ENCODE measurements at regions of chr12 and their contacts with region 1.

Region 1: DNA sequence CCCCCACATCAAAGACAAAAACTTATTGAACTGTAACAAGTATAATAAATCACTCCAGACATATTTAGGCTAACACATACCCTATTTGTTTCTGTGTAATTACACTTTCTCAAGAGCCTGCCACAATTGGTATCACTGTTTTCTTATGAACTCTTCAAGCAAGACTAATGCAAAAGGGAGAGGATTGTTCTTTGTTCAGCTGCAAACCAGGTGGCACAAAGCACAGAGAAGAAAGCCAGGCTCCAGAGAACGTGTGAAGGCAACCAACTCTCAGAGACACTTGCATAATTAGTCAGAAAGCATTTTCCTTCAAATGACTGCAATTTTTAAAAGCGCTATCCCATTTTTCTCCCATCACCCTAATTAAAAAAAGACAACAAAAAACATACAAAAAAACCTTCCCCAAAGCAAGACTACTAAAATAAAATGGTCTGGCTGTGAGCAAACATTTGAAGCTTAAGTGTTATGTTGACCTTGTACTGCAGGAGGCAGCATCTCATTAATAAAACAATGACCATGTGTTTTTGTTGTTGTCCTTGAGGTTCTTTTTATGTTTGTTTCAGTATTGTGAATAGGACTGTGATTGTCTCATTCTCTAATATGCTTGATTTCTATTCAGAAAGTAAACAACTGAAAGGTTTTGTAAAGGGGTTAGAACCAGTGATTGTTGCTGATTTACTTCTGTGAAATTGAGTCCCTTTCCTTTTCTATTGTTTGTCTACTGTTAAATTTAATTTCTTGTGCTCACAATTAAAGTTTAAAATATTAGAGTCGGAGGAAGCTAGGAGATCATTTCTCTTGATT is 452.7 kb upstream of the PDE3A start:
- DNase-seq: peak; percentile 85
- H3K4me3 ChIP-seq: no peak overlapping the region
- H3K27ac ChIP-seq: no peak overlapping the region
- H3K4me1 ChIP-seq: peaks cover 5% of the 10 kb centered on the region
- H3K27me3 ChIP-seq: no peaks in the 10 kb centered on the region
- CTCF ChIP-seq: peak; percentile 42 to 48
- POLR2A ChIP-seq: no peak

Region 2: DNA sequence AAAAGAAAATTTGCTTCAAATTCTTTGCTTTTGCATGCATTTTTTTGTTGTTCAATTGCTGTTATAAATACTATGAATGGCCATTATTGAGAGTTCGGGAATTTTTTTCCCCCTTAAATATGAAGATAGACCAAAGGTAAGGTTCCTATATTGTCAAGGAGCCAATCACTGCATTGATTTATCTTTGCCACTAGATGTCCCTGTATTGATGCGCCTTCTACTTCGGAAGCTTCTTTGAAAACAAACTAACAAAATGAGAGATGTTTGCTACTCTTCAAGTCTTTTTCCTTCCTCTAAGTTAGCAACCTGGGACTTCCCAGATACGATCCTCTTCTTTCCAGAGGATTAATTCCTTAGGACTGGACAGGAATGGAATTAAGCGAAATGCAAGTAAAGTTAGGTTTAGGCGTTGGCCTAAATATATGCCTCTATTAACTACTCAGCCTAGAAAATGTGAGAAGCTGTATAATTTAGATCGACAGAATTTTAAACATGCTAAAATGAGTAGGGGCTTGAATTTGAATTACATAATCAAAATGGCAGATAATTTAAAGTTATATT is 158.2 kb before region 1 on chr12:
- CTCF ChIA-PET with region 1: interaction called, 34 read pairs
- POLR2A ChIA-PET with region 1: no interaction called
- dilution Hi-C with region 1: no loop called
- intact Hi-C with region 1: loop called (anchors 1 kb)
- DNase-seq: peak; percentile 64
- H3K4me3 ChIP-seq: no peak overlapping the region
- H3K27ac ChIP-seq: no peak overlapping the region
- H3K4me1 ChIP-seq: peaks cover 3% of the 10 kb centered on the region
- H3K27me3 ChIP-seq: no peaks in the 10 kb centered on the region
- CTCF ChIP-seq: peak; percentile 46 to 56
- POLR2A ChIP-seq: no peak

Region 3: DNA sequence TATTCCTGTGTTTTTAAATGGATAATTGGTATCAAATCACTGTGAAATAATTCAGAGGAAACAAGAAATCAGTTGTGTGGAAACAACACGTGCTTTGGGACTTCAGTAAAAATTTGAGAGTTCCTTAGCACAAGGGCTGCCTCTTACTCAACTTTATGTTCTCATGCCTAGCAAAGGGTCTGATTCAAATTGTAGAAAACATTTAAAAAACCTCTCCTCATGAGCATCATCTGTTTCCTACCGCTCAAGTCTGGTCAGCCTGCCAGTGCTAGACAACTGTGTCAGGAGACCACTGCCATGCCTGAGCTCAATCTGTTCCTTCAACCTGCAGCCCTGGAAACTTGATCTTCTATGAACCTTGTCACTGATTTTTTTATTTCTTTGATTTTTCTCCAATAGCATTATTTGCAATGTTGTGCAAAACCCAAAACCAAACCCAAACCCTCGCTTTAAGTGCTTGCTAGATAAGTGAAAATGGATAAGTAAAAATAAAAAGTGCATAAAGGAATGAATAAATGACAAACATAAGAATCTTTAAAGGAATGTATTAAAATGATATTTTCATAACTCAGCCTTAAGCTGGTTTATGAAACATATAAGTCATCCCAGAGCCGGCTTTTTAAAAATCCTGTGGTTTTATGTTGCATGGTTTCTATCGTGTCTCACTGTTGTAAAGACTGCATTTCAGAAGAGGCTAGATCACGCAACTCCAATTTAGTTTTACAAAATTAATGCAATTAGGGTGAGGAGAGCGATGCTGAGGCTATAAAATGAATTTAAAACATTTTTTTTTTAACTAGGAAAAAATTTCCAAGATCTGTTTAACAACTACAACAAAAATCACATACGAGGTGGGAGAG is 91.5 kb after region 1 on chr12:
- CTCF ChIA-PET with region 1: interaction called, 10 read pairs
- POLR2A ChIA-PET with region 1: no interaction called
- dilution Hi-C with region 1: no loop called
- intact Hi-C with region 1: no loop called
- DNase-seq: no peak
- H3K4me3 ChIP-seq: no peak overlapping the region
- H3K27ac ChIP-seq: no peak overlapping the region
- H3K4me1 ChIP-seq: no peaks in the 10 kb centered on the region
- H3K27me3 ChIP-seq: no peaks in the 10 kb centered on the region
- CTCF ChIP-seq: no peak
- POLR2A ChIP-seq: no peak

Region 4: DNA sequence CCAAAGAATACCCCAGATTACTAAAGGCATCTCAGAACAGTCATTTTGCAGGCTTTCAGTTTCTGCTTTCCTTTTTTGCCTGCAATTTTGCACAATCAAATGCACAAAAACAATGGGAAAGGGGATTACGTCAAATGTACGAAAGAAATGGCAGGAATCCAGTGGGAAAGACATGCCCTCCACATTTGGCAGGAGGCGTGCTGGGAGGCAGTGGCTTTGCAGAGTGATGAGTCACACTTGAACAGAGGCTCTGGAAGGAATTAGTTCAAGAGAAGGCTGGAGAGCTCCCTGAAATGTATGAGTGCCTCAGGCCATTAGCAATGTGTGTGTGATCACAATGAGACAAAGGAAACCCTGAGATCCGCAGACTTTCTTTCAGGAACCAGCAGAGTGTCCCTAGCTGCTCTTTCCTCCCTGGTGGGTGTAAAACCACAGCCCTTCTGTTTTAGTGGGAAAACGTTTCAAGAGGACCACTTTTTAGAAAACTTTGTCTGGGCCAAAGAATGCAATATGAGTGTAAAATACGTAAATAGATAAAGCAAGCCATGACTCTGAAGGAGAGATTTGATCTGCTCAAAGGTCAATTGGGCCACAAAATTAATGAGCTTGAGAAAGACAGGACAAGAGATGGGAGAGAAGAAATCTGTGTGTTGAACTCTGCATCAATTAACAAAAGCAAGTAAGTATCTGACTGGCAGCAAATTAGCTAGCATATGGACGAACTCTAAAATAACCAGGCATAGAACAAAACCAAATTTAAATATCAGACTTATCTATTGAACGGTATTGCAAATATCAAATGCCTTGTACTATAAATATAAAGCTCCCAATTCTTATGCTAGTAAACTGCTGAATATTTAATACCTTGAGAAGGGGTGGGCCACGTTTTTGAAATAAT is 297.3 kb after region 1 on chr12:
- CTCF ChIA-PET with region 1: interaction called, 14 read pairs
- POLR2A ChIA-PET with region 1: no interaction called
- dilution Hi-C with region 1: no loop called
- intact Hi-C with region 1: no loop called
- DNase-seq: peak; percentile 99
- H3K4me3 ChIP-seq: peak overlapping the region in 1 of 3 experiments; percentile 15
- H3K27ac ChIP-seq: peak overlapping the region; percentile 77
- H3K4me1 ChIP-seq: peaks cover 12% of the 10 kb centered on the region
- H3K27me3 ChIP-seq: no peaks in the 10 kb centered on the region
- CTCF ChIP-seq: no peak
- POLR2A ChIP-seq: no peak

Region 5: GRCh38 chr12:20369305-20370005 is 453.9 kb after region 1 on chr12:
- CTCF ChIA-PET with region 1: interaction called, 12 read pairs
- POLR2A ChIA-PET with region 1: no interaction called
- dilution Hi-C with region 1: no loop called
- intact Hi-C with region 1: loop called (anchors 2 kb)
- DNase-seq: peak; percentile 85
- H3K4me3 ChIP-seq: peak overlapping the region; percentile 87 to 99 (median 97)
- H3K27ac ChIP-seq: peak overlapping the region; percentile 75
- H3K4me1 ChIP-seq: peaks cover 28% of the 10 kb centered on the region
- H3K27me3 ChIP-seq: no peaks in the 10 kb centered on the region
- CTCF ChIP-seq: peak in 1 of 2 donors; percentile 23
- POLR2A ChIP-seq: peak; percentile 71

Region 6: DNA sequence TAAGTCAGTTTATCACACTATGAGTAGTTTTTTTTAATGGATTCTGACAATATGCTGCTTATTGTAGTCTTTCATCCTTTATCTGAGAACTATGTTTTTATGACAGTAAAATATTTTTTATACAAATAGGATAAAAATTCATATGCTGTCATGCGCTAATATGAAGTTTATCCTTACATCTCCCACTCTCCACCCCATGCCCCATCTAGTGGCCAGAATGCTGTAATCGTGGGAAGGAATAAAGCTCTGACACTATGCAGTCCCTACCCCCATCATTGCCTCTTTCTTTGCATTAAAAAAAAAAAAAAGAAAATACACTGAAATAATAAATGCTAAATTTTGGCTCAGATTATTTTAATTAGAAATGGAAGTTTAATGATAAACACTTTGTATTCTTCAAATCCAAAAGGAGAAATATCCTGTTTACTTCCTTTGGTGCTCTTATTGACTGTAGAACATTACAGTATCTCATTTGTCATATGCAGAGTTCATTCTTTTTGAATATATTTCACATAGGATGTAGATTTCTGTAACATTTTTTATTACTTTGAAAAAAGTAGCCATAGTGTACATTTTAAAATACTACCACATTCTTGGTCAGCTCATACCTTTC is 633.6 kb after region 1 on chr12:
- CTCF ChIA-PET with region 1: interaction called, 29 read pairs
- POLR2A ChIA-PET with region 1: no interaction called
- dilution Hi-C with region 1: no loop called
- intact Hi-C with region 1: loop called (anchors 5 kb)
- DNase-seq: peak; percentile 80
- H3K4me3 ChIP-seq: no peak overlapping the region
- H3K27ac ChIP-seq: no peak overlapping the region
- H3K4me1 ChIP-seq: peaks cover 9% of the 10 kb centered on the region
- H3K27me3 ChIP-seq: no peaks in the 10 kb centered on the region
- CTCF ChIP-seq: peak; percentile 47 to 58
- POLR2A ChIP-seq: no peak

Region 7: DNA sequence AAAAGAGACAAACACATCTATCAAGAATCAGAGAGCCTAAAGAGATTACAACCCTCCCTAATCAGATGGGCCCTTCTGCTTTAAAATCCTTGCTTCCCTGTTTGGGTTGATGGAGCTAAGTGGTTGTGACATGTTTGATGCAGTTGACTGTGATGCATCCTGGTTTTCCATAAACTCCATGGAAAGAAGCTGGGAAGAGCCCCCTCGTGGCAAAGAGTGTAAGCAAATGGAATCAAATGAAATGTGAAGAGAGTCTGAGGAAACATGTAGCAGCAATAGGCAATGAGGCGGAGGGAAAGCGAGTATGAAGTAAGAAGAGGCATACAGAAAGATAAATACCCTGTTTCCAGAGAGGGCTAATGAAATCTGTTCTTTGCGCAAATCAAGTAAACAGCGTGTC is 709.1 kb after region 1 on chr12:
- CTCF ChIA-PET with region 1: interaction called, 34 read pairs
- POLR2A ChIA-PET with region 1: no interaction called
- dilution Hi-C with region 1: no loop called
- intact Hi-C with region 1: no loop called
- DNase-seq: peak; percentile 58
- H3K4me3 ChIP-seq: no peak overlapping the region
- H3K27ac ChIP-seq: no peak overlapping the region
- H3K4me1 ChIP-seq: peaks cover 11% of the 10 kb centered on the region
- H3K27me3 ChIP-seq: no peaks in the 10 kb centered on the region
- CTCF ChIP-seq: peak; percentile 32 to 46
- POLR2A ChIP-seq: no peak

Measured in endothelial cell of umbilical vein (primary cell).